Gastrocnemius medialis (tissue), 4 donors: ENCODE measurements at regions of chr22 and their contacts with region 1.

Region 1: DNA sequence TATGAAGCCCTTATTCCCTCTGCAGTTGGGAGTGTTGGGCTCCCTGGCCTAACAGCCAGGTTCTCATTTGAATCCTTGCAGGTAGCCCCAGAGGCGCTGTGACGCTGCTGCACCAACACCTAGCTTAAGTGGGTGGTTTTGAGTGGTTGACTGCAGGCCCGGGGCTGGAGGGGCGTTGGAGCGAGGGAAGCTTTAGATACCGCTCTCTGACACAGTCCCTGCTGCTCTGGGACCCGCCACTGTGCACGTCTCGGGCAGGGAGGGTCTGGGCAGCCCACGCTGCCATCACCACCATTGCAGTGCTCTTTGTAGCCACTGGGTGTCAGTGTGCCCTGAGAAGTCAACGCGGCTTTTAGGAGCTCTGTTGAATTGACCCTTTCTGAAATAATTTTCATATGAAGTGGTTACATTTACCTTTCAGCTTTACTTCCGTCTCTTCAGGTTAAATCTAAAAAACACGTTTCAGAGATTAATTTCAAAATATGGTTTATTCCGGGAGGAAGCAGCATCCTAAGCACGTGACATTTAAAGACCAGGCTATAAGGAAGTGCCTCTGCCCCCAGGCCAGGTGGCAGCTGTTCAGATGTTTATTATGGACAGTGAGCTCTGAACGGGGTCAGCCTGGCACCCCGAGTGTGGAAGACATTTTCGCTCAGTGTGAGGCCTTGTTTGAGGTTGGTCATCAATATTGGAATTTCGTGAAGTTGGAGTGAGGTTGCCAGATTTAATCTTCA is 30.9 kb upstream of the PARVB start:
- DNase-seq: peak; percentile 29 to 53
- ATAC-seq: peak; percentile 60 to 63
- H3K4me3 ChIP-seq: no peak overlapping the region
- H3K27ac ChIP-seq: peak overlapping the region; percentile 74 to 85 (median 82)
- H3K4me1 ChIP-seq: peaks cover 25 to 28% of the 10 kb centered on the region in 2 donors
- H3K27me3 ChIP-seq: no peaks in the 10 kb centered on the region
- CTCF ChIP-seq: peak; percentile 91 to 98 (median 96)
- POLR2A ChIP-seq: no peak

Region 2: DNA sequence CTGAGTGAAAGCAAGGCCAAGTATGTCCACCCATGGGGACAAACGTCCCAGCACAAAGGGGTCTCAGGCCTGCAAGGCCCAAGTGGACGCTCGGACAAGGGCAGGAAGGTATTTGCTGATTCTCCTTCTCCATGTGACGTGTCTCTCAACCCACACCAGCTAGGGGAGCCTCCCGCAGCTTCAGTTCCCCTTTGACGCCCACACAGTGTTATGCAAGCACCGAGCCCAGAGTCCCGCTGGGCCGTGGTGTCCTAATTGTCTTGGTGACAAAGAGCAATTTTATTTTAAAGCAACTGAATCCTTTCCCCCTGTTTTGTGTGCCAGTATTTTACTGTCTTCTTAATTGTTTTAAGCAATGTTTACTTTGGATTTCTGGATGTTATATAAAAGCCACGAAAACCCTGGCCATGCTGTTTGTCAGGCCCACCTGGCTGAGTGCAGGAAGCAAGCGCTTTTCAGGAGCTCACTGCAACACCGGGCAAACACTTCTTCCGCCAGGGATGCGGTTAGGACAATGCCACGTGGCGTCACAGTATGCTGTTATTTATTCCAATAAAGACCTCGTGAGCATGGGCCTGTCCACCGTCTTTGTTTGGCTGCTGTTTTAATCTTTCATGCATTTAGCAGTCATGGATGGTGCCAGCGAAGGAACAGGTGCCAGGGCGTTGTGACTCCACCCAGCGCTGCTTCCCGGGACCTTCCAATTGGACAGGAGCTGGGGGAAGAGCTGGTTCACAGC is 179.3 kb after region 1 on chr22:
- in situ Hi-C with region 1: no loop called
- intact Hi-C with region 1: loop called (anchors 10 kb)
- DNase-seq: peak; percentile 31 to 48
- ATAC-seq: peak; percentile 43 to 57
- H3K4me3 ChIP-seq: no peak overlapping the region
- H3K27ac ChIP-seq: peak overlapping the region in 1 of 4 donors; percentile 6
- H3K4me1 ChIP-seq: peaks cover 2 to 10% of the 10 kb centered on the region in 2 donors
- H3K27me3 ChIP-seq: no peaks in the 10 kb centered on the region
- CTCF ChIP-seq: no peak
- POLR2A ChIP-seq: no peak

Region 3: GRCh38 chr22:44625981-44626687 is 632.9 kb after region 1 on chr22:
- in situ Hi-C with region 1: loop called (anchors 10 to 25 kb)
- intact Hi-C with region 1: loop called (anchors 1 kb)
- DNase-seq: peak; percentile 14 to 28
- ATAC-seq: peak; percentile 81 to 82
- H3K4me3 ChIP-seq: no peak overlapping the region
- H3K27ac ChIP-seq: no peak overlapping the region
- H3K4me1 ChIP-seq: no peaks in the 10 kb centered on the region
- H3K27me3 ChIP-seq: peaks cover 3 to 8% (median 8%) of the 10 kb centered on the region in 3 donors
- CTCF ChIP-seq: peak; percentile 95 to 99 (median 97)
- POLR2A ChIP-seq: no peak